MCF 10A (cell line): ENCODE measurements at regions of chr21 and their contacts with region 1.

Region 1: GRCh38 chr21:36069713-36070573 is at the start of gene CBR1:
- DNase-seq: peak; percentile 90
- H3K4me3 Mint-ChIP-seq: peak within 1 kb of the TSS; percentile 88
- H3K27ac Mint-ChIP-seq: peak within 1 kb of the TSS; percentile 92
- H3K4me1 Mint-ChIP-seq: peaks cover 20% of the 10 kb centered on the region
- H3K27me3 Mint-ChIP-seq: no peaks in the 10 kb centered on the region
- CTCF ChIP-seq: no peak
- total RNA-seq, gene CBR1: 35.8 and 38.6 TPM in 2 replicates

Region 2: GRCh38 chr21:35953615-35954014 is 116.3 kb before region 1 on chr21:
- CTCF ChIA-PET with region 1: no interaction called
- POLR2A ChIA-PET with region 1: no interaction called
- intact Hi-C with region 1: no loop called
- DNase-seq: no peak
- H3K4me3 Mint-ChIP-seq: no peak overlapping the region
- H3K27ac Mint-ChIP-seq: no peak overlapping the region
- H3K4me1 Mint-ChIP-seq: no peaks in the 10 kb centered on the region
- H3K27me3 Mint-ChIP-seq: peaks cover 13% of the 10 kb centered on the region
- CTCF ChIP-seq: no peak

Region 3: DNA sequence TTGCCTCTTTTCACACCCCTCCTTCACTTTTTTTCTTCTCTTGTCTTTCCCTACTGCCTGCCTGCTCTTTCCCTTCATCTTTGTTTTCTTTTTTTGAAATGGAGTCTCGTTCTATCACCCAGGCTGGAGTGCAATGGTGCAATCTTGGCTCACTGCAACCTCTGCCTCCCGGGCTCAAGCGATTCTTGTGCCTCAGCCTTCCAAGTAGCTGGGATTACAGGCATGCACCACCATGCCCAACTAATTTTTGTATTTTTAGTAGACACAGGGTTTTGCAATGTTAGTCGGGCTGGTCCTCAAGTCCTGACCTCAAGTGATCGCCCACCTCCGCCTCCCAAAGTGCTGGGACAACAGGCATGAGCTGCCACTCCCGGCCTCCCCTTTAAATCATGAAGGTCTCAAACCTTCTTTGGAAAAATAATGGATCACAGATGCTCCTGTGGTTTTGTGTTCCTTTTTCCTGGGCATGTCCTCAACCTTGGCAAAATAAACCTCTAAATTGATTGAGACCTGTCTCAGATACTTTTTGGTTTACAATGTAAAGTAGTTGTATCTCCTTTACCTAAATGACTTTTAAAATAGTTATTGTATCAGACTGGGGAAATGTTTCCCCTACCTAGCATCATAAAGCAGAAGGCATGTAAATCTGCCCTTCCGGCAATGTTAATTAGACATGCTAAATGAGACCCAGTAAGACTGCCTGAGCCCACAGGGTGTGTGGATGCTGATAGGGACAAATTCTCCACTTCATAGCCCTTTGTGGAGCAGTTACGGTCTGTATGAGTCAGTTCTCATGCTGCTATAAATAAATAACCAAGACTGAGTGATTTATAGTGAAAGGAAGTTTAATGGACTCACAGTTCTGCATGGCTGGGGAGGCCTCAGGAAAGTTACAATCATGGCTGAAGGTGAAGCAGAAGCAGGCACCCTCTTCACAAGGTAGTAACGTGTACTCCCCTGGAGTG is 27.6 kb after region 1 on chr21:
- CTCF ChIA-PET with region 1: interaction called, 3 read pairs
- POLR2A ChIA-PET with region 1: interaction called, 14 read pairs
- intact Hi-C with region 1: no loop called
- DNase-seq: peak; percentile 10
- H3K4me3 Mint-ChIP-seq: no peak overlapping the region
- H3K27ac Mint-ChIP-seq: no peak overlapping the region
- H3K4me1 Mint-ChIP-seq: peaks cover 12% of the 10 kb centered on the region
- H3K27me3 Mint-ChIP-seq: no peaks in the 10 kb centered on the region
- CTCF ChIP-seq: no peak